ENCODE measurements at regions of chr16 and their contacts with region 1.

Region 1: GRCh38 chr16:86563489-86564345 is 2.9 kb upstream of the FOXC2 start:
- DNase-seq: peak; percentile 91
- CTCF ChIP-seq: peak; percentile 96

Region 2: GRCh38 chr16:86519649-86520316 is 43.9 kb before region 1 on chr16:
- in situ Hi-C with region 1: loop called (anchors 10 kb)
- DNase-seq: peak; percentile 83
- CTCF ChIP-seq: peak; percentile 91

Region 3: GRCh38 chr16:86618811-86619794 is 55.4 kb after region 1 on chr16:
- in situ Hi-C with region 1: no loop called
- DNase-seq: no peak
- CTCF ChIP-seq: no peak

Region 4: DNA sequence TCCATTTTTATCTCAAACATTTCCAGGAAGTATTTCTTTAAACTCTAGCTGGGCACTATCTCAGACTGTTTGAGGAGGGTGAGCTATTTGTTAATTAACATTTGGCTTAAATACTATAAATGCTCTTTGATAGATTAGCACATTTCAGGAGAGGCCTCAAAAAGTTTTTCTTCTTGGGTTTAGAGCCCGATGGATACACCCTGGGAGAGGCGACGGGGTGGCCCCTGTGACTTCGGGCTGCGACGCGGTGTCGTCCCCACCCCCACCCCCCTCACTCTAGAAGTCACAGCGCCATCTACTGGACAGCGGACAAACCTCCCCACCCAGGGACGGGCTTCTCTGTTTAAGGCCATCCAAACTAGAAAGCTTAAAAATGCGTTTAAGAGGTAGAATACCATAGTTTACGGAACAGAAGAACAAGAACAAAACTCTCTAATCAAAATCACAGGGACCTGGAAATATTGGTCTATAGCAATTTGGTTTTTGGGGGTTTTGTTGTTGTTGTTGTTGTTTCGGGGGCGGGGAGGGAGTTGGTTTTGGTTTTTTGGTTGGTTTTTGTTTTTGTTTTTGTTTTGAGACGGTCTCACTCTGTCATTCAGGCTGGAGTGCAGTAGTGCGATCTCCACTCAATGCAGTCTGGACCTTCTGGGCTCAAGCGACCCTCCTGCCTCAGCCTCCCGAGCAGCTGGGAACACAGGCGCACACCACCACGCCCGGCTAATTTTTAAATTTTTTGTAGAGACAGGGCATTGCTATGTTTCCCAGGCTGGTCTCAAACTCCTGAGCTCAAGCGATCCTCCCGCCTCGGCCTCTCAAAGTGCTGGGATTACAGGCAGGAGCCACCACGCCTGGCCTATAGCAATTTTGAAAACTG is 499.1 kb after region 1 on chr16:
- in situ Hi-C with region 1: loop called (anchors 10 kb)
- DNase-seq: peak; percentile 86
- CTCF ChIP-seq: peak; percentile 78

Region 5: DNA sequence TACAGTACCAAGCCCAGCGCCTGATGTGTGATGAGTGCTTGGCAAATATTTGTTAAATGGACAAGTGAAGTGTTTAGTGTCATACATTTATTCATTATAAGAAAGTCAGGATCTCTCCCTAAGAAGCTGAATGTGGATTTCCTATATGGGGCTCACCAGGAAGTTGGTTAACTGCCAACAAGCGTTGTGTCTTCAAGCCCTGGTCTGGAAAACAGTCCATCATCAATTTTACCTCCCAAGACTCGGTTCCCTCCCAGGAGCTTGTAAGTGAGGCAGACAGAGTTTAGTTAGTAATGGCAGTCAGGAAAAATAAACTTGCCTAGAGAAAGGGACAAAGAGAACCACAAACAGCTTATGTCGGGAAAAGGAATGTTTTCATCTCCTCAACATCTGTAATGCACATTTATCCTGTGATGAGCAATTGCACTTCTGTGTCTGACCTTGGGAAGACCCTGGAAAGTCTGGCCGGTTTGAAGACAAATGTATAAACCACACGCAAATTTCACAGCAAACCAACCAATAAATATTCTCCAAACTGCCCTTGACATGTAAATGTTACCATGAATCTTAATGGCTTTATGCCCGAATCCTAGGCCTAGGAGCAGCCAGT is 725.1 kb after region 1 on chr16:
- in situ Hi-C with region 1: loop called (anchors 10 kb)
- DNase-seq: no peak
- CTCF ChIP-seq: no peak

Measured in GM13977 (cell line).